Transverse colon (tissue), 4 donors: ENCODE measurements at regions of chr4 and their contacts with region 1.

Region 1: DNA sequence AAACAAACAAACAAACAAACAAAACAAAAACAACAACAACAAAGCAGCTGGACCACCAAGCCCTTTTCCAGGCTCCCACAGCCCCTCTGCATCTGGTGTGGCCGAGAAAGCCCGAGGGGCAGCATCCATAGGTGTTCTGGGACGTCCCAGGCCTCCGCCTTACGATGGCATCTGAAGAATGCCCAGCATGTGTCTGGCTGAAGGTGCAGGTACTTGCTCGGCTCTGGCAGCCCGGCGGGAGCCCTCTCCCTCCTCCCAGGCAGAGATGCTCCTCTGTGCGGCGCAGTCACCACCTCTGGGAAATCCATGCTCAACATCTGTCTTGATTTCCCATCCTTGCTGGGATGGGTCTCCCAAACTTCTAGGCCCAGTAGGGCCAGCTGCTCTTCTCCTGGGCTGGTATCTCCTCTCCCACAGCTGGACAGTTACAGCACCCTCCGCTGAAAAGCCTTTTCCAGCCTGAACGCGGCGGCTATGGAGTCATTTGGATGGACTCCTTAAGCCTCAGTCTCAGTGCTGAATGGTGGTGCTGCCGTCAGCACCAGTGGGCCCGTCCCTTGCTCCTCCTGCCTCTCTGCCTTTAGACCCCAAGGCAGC is 4.3 kb downstream of the PSAPL1 start:
- DNase-seq: no peak
- H3K4me3 ChIP-seq: no peak overlapping the region
- H3K27ac ChIP-seq: no peak overlapping the region
- H3K4me1 ChIP-seq: peaks cover 0 to 3% (median 0%) of the 10 kb centered on the region in 4 donors
- H3K27me3 ChIP-seq: no peaks in the 10 kb centered on the region
- CTCF ChIP-seq: no peak
- EP300 ChIP-seq: no peak
- POLR2A ChIP-seq: no peak

Region 2: DNA sequence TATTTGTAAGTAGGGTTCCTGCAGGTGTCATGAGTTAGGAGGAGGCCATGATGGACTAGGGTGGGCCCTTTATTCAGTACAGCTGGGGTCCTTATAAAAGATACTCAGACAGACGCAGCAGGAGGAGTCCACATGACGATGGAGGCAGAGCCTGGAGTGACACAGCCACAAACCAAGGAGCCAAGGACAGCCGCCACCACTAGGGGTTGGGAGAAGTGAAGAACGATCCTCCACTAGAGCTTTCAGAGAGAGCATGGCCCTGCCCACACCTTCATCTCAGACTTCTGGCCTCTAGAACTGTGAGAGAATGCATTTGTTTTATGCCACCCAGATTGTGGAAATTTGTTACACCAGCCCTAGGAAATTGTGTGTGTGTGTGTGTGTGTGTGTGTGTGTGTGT is 1261.2 kb before region 1 on chr4:
- in situ Hi-C with region 1: no loop called
- intact Hi-C with region 1: no loop called
- DNase-seq: no peak
- H3K4me3 ChIP-seq: no peak overlapping the region
- H3K27ac ChIP-seq: no peak overlapping the region
- H3K4me1 ChIP-seq: no peaks in the 10 kb centered on the region
- H3K27me3 ChIP-seq: no peaks in the 10 kb centered on the region
- CTCF ChIP-seq: no peak
- EP300 ChIP-seq: no peak
- POLR2A ChIP-seq: no peak

Region 3: DNA sequence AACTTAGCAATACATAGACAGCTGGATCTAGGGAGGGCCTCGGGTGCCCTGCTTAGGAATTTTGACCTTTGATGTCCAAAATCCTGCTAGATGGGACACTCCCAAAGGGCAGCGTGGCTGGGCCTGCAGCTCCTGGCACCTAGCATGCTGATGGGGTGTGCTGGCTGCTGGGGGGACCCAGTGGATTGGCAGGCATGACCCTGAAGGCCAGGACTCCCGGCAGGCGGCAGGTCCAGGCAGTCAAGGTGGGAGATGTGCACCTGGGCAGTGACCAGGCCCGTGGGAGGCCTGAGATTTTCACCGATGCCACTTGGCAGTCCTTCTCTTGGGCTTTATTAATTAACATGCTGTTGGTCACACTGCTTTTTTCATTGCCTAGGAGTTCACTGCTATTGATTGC is 80.1 kb before region 1 on chr4:
- in situ Hi-C with region 1: no loop called
- intact Hi-C with region 1: loop called (anchors 1 kb)
- DNase-seq: no peak
- H3K4me3 ChIP-seq: no peak overlapping the region
- H3K27ac ChIP-seq: no peak overlapping the region
- H3K4me1 ChIP-seq: no peaks in the 10 kb centered on the region
- H3K27me3 ChIP-seq: no peaks in the 10 kb centered on the region
- CTCF ChIP-seq: no peak
- EP300 ChIP-seq: no peak
- POLR2A ChIP-seq: no peak

Region 4: GRCh38 chr4:7381221-7381889 is 49.1 kb before region 1 on chr4:
- in situ Hi-C with region 1: no loop called
- intact Hi-C with region 1: no loop called
- DNase-seq: no peak
- H3K4me3 ChIP-seq: no peak overlapping the region
- H3K27ac ChIP-seq: no peak overlapping the region
- H3K4me1 ChIP-seq: no peaks in the 10 kb centered on the region
- H3K27me3 ChIP-seq: peaks cover 4% of the 10 kb centered on the region
- CTCF ChIP-seq: no peak
- EP300 ChIP-seq: no peak
- POLR2A ChIP-seq: no peak

Region 5: GRCh38 chr4:7480423-7480822 is 50.0 kb after region 1 on chr4:
- in situ Hi-C with region 1: no loop called
- intact Hi-C with region 1: loop called (anchors 1 kb)
- DNase-seq: no peak
- H3K4me3 ChIP-seq: no peak overlapping the region
- H3K27ac ChIP-seq: no peak overlapping the region
- H3K4me1 ChIP-seq: no peaks in the 10 kb centered on the region
- H3K27me3 ChIP-seq: no peaks in the 10 kb centered on the region
- CTCF ChIP-seq: no peak
- EP300 ChIP-seq: no peak
- POLR2A ChIP-seq: no peak